Heart left ventricle (tissue), 16 donors: ENCODE measurements at regions of chr18 and their contacts with region 1.

Region 1: GRCh38 chr18:24987303-24988252 is 364.4 kb downstream of the ZNF521 start:
- DNase-seq: peak in 3 of 5 donors; percentile 25 to 59 (median 41)
- ATAC-seq: peak; percentile 70 to 83 (median 74)
- H3K4me3 ChIP-seq: peak overlapping the region in 7 of 12 donors; percentile 13 to 42 (median 26)
- H3K27ac ChIP-seq: peak overlapping the region; percentile 6 to 73 (median 55)
- H3K4me1 ChIP-seq: peaks cover 0 to 34% (median 9%) of the 10 kb centered on the region in 12 donors
- H3K27me3 ChIP-seq: no peaks in the 10 kb centered on the region
- CTCF ChIP-seq: no peak
- POLR2A ChIP-seq: no peak

Region 2: GRCh38 chr18:24846138-24846537 is 141.4 kb before region 1 on chr18:
- intact Hi-C with region 1: no loop called
- DNase-seq: no peak
- ATAC-seq: no peak
- H3K4me3 ChIP-seq: no peak overlapping the region
- H3K27ac ChIP-seq: no peak overlapping the region
- H3K4me1 ChIP-seq: no peaks in the 10 kb centered on the region
- H3K27me3 ChIP-seq: no peaks in the 10 kb centered on the region
- CTCF ChIP-seq: no peak
- POLR2A ChIP-seq: no peak

Region 3: GRCh38 chr18:25042641-25043051 is 55.1 kb after region 1 on chr18:
- intact Hi-C with region 1: loop called in 1 of 10 experiments (anchors 10 kb)
- DNase-seq: no peak
- ATAC-seq: peak in 2 of 4 donors; percentile 36 to 60
- H3K4me3 ChIP-seq: no peak overlapping the region
- H3K27ac ChIP-seq: no peak overlapping the region
- H3K4me1 ChIP-seq: peaks cover 0 to 10% (median 0%) of the 10 kb centered on the region in 12 donors
- H3K27me3 ChIP-seq: no peaks in the 10 kb centered on the region
- CTCF ChIP-seq: no peak
- POLR2A ChIP-seq: no peak